CD4-positive, alpha-beta T cell (primary cell): ENCODE measurements at regions of chr9 and their contacts with region 1.

Region 1: DNA sequence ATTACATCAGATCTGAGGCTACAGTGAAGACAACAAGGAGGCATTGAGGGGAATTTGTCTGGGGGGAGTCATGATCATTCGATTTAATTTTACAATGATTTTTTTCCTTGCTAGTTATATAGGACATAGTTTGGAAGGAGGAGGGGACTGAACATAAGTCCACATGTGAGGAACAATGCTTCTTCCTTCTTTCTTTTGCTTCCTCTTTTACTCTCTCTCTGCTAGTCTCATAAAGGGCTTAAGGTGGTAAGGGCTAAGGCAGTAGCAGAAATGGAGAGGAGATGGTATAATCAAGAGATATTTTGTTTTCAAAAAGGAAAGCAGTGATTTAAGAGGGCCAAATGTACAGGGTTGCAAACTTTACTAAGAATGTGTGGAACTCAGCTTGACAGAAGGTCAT is 64.3 kb downstream of the GRIN3A start:
- DNase-seq: no peak
- ATAC-seq: no peak
- H3K4me3 ChIP-seq: no peak overlapping the region
- H3K4me3 Mint-ChIP-seq: no peak overlapping the region
- H3K27ac ChIP-seq: no peak overlapping the region
- H3K27ac Mint-ChIP-seq: no peak overlapping the region
- H3K4me1 ChIP-seq: no peaks in the 10 kb centered on the region
- H3K4me1 Mint-ChIP-seq: no peaks in the 10 kb centered on the region
- H3K27me3 ChIP-seq: no peaks in the 10 kb centered on the region
- H3K27me3 Mint-ChIP-seq: peaks cover 3% of the 10 kb centered on the region
- CTCF ChIP-seq: no peak

Region 2: DNA sequence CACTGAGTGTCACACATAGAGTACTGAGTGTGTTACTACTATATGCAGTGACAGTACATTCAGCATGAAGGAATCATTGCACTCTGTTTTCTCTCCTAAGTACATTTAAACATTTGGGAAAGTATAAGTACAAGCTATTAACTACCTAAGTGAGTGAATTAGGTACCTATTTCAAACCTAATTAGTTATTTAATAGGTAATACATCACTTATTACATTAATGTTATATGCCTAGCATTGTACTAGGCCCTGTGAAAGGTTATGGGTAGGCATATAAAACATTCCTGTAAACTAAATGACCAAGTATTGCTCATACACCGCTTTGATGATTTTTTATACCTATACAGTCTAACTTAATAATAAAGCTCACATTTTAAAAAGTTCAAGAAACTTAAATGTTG is 53.7 kb before region 1 on chr9:
- CTCF ChIA-PET with region 1: no interaction called
- POLR2A ChIA-PET with region 1: no interaction called
- intact Hi-C with region 1: loop called in 1 of 2 experiments (anchors 5 kb)
- DNase-seq: no peak
- ATAC-seq: no peak
- H3K4me3 ChIP-seq: no peak overlapping the region
- H3K4me3 Mint-ChIP-seq: no peak overlapping the region
- H3K27ac ChIP-seq: no peak overlapping the region
- H3K27ac Mint-ChIP-seq: no peak overlapping the region
- H3K4me1 ChIP-seq: no peaks in the 10 kb centered on the region
- H3K4me1 Mint-ChIP-seq: no peaks in the 10 kb centered on the region
- H3K27me3 ChIP-seq: no peaks in the 10 kb centered on the region
- H3K27me3 Mint-ChIP-seq: no peaks in the 10 kb centered on the region
- CTCF ChIP-seq: no peak

Region 3: DNA sequence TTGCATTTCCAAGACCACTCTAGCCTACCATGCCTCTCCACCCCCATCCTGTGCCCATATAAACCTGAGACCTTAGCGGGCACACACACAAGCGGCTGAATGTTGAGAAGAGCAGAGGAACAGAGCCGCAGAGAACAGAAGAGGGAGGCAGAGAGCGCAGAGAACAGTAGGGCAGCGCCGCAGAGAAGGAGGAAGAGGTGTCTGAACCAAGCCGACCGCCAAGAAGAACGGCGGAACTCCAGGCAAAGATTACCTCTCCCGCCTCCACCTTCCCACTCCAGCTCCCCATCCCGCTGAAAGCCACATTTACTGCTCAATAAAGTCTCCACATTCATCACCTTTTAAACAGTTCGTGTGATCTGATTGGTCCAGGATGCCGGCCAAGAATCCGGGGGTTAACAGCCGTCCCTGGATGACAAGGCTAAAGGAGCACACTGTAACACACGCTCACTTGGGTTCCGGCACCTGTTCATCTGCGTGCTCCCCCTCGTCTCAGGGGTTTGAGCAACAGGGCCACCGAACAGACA is 31.0 kb after region 1 on chr9:
- CTCF ChIA-PET with region 1: no interaction called
- POLR2A ChIA-PET with region 1: no interaction called
- intact Hi-C with region 1: no loop called
- DNase-seq: peak in 11 of 14 experiments; percentile 2 to 50 (median 17)
- ATAC-seq: peak; percentile 80
- H3K4me3 ChIP-seq: peak overlapping the region; percentile 37
- H3K4me3 Mint-ChIP-seq: peak overlapping the region; percentile 85
- H3K27ac ChIP-seq: no peak overlapping the region
- H3K27ac Mint-ChIP-seq: no peak overlapping the region
- H3K4me1 ChIP-seq: peaks cover 7% of the 10 kb centered on the region
- H3K4me1 Mint-ChIP-seq: peaks cover 12% of the 10 kb centered on the region
- H3K27me3 ChIP-seq: peaks cover 0 to 12% of the 10 kb centered on the region in 2 experiments
- H3K27me3 Mint-ChIP-seq: peaks cover 38% of the 10 kb centered on the region
- CTCF ChIP-seq: peak; percentile 17